ENCODE measurements at regions of chr15 and their contacts with region 1.

Region 1: DNA sequence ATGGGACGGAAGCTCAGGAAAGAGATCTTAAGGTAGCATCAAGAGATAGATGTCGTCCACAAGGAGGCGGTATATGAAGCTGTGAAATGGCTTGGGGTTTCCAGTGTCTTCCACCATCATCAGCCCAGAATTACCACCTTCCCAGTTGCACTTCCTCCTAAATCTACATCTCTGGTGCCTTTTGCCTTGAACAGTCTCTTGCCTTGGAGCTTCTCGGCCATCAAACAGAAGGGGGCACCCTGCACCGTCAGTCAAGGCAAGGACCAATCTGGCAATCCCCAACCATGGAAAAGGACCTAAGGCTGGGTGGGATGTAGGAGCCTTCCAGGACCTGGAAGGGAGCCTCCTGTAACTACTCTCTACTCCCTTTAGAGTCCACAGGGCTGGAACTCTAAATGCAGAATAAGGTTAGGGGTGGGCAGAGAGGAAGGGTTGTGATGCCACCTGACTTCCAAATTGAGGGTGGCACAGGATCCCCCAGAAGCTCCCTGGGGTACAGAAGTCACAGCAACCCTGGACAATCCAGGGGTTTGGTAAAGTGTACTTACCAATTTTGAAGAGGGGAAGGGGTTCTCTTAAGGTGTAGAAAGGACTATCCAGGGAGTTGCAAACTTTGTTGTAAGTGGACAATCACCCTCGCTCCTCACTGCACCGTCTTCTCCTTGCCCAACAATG is 1.0 kb upstream of the RYR3 start:
- DNase-seq: peak; percentile 66 to 75 (median 73)
- H3K4me3 ChIP-seq: peak overlapping the region in 4 of 7 experiments; percentile 8 to 72 (median 60)
- H3K27ac ChIP-seq: no peak overlapping the region
- H3K4me1 ChIP-seq: peaks cover 0 to 20% (median 12%) of the 10 kb centered on the region in 4 experiments
- H3K27me3 ChIP-seq: peaks cover 5 to 45% (median 25%) of the 10 kb centered on the region in 5 experiments

Region 2: DNA sequence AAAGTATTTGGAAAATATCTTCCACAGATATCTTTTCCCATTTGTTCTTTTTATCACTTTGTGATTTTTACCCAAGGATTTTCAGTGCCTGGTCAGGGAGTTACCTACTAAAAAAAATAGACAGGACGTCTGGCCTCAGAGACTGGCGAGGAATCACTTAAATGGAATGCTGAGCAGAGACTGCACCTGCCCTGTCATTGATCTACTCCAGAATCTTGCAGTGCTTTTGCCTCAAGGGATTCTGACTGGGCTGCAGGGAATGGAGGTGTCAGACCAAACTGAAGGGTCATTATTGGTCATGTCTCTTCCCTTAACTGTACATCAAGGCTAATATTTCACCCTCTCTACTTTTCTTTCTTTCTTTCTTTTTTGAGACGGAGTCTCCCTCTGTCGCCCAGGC is 11.1 kb before region 1 on chr15:
- CTCF ChIA-PET with region 1: interaction called, 14 read pairs
- POLR2A ChIA-PET with region 1: no interaction called
- DNase-seq: no peak
- H3K4me3 ChIP-seq: no peak overlapping the region
- H3K27ac ChIP-seq: no peak overlapping the region
- H3K4me1 ChIP-seq: no peaks in the 10 kb centered on the region
- H3K27me3 ChIP-seq: peaks cover 0 to 4% (median 0%) of the 10 kb centered on the region in 5 experiments

Region 3: DNA sequence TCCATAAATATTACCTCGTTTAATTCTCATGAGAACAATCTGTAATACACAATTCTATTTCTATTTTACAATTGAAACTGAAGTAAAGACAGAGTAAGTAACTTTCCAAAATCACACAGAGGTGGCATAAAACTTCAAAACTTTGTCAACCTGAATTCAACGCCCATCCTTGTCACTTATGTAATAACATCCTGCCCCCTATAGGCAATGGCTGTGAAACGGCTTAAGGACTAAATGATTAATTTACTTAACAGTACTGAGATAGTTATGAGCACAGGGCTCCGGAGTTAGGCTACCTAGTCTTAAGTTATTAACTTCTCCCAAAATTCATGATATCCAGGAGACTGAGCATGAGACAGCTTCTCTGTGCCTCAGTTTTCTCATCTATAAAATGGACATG is 365.5 kb after region 1 on chr15:
- CTCF ChIA-PET with region 1: interaction called, 11 read pairs
- POLR2A ChIA-PET with region 1: no interaction called
- DNase-seq: peak; percentile 66 to 83 (median 80)
- H3K4me3 ChIP-seq: no peak overlapping the region
- H3K27ac ChIP-seq: no peak overlapping the region
- H3K4me1 ChIP-seq: no peaks in the 10 kb centered on the region
- H3K27me3 ChIP-seq: peaks cover 0 to 4% (median 0%) of the 10 kb centered on the region in 5 experiments

Region 4: DNA sequence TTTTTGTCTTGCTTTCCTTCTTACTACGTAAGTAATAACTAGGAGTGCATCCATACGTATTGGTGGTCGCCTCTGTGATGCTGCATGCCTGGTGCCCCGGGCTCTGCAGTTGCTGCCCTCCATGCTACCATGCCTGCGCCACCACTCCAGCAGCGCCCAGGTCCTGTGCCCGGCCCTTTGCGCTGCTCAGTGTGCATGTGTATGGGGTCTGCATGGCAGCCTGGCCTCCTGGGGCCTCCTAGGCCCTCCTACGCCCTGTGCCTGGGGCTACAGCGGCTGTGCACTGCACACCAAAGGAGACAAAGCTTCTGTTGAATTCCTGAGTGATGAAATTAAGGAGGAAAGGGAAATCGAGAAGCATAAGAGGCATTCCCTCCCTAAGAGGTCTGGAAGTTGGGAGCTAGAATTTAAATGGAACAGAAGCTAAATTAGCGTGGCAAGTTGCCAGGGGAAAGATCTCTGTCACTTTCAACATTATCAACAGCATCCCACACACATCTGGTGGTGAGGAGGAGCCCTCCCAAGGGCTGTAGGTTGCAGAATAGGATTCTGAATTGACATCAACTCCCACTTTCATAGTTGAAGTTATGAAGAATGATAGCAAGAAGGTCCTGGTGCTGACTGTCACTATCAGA is 383.5 kb after region 1 on chr15:
- CTCF ChIA-PET with region 1: interaction called, 11 read pairs
- POLR2A ChIA-PET with region 1: no interaction called
- DNase-seq: no peak
- H3K4me3 ChIP-seq: no peak overlapping the region
- H3K27ac ChIP-seq: no peak overlapping the region
- H3K4me1 ChIP-seq: no peaks in the 10 kb centered on the region
- H3K27me3 ChIP-seq: peaks cover 0 to 6% (median 0%) of the 10 kb centered on the region in 5 experiments

Region 5: GRCh38 chr15:33700695-33701304 is 391.1 kb after region 1 on chr15:
- CTCF ChIA-PET with region 1: interaction called, 31 read pairs
- POLR2A ChIA-PET with region 1: no interaction called
- DNase-seq: peak; percentile 68 to 87 (median 80)
- H3K4me3 ChIP-seq: no peak overlapping the region
- H3K27ac ChIP-seq: no peak overlapping the region
- H3K4me1 ChIP-seq: no peaks in the 10 kb centered on the region
- H3K27me3 ChIP-seq: peaks cover 0 to 4% (median 0%) of the 10 kb centered on the region in 5 experiments

Measured in common myeloid progenitor, CD34-positive (primary cell).